ENCODE measurements at regions of chr7 and their contacts with region 1.

Region 1: DNA sequence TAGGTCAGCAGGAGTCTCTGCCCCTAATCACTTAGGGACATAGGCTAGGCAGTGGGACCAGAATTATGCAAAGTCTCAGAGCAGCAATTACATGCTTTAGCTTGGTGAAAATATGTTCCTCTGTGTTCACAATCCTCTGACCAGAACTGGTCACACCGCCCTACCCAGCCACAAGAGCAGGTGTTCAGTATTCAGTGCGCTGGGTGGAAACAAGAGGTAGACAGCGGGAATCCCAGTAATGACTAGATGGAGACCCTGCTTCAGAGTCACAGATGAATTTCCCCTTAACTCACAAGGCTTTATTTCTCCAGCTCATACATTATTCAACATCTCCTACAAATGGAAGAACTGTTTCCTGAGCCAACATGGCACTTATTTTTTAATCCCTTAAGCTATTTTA is 763.7 kb upstream of the POM121L12 start:
- DNase-seq: no peak
- H3K4me3 ChIP-seq: no peak overlapping the region
- H3K27ac ChIP-seq: peak overlapping the region; percentile 5
- H3K4me1 ChIP-seq: peaks cover 30% of the 10 kb centered on the region
- H3K27me3 ChIP-seq: no peaks in the 10 kb centered on the region
- CTCF ChIP-seq: no peak
- POLR2A ChIP-seq: no peak

Region 2: DNA sequence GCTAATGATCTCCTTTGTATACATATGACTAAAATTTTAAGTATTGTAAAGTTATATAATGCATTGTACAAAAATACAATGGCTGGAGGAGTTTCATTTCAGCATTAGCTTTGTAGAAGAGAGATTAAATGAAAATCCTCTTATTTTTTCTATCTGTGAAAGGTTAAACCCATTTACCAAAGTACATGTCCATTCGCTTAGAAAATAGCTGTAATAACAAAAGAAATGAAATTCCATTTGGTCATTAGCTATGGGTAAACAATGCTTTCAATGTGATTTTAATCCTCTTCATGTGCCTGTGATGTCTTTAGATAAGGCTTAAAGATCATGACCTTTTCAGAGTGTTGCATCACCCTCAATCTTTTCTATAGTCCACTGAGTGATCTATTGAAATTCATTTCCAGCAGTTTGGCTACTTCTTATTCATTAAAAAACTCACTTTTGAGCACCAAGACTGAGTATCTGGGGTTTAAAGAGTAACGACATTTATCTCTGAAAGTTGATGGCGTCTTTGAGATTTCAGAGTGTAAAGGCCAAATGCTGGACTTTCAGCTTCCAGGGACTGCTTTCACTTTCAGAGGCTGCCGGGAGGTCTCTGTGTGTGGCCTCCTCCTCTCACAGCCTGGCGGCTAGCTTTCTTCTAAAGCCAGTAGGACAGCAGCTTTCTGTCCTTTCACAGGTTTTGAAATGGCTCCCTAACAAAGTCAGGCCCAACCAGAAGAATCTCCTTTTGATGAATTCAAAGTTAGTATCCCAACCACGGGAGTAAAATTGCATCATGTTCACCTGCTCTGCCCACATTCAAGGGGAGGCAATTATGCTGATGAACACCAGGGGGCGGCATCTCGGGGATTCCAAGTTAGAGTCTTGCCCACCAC is 253.7 kb before region 1 on chr7:
- CTCF ChIA-PET with region 1: no interaction called
- POLR2A ChIA-PET with region 1: no interaction called
- dilution Hi-C with region 1: no loop called
- intact Hi-C with region 1: loop called (anchors 2 kb)
- DNase-seq: peak; percentile 18
- H3K4me3 ChIP-seq: no peak overlapping the region
- H3K27ac ChIP-seq: no peak overlapping the region
- H3K4me1 ChIP-seq: no peaks in the 10 kb centered on the region
- H3K27me3 ChIP-seq: no peaks in the 10 kb centered on the region
- CTCF ChIP-seq: peak; percentile 54 to 66
- POLR2A ChIP-seq: no peak

Region 3: GRCh38 chr7:52243685-52244084 is 28.0 kb before region 1 on chr7:
- CTCF ChIA-PET with region 1: no interaction called
- POLR2A ChIA-PET with region 1: no interaction called
- dilution Hi-C with region 1: no loop called
- intact Hi-C with region 1: no loop called
- DNase-seq: no peak
- H3K4me3 ChIP-seq: no peak overlapping the region
- H3K27ac ChIP-seq: no peak overlapping the region
- H3K4me1 ChIP-seq: no peaks in the 10 kb centered on the region
- H3K27me3 ChIP-seq: no peaks in the 10 kb centered on the region
- CTCF ChIP-seq: no peak
- POLR2A ChIP-seq: no peak

Region 4: GRCh38 chr7:52285689-52286088 is 14.0 kb after region 1 on chr7:
- CTCF ChIA-PET with region 1: interaction called, 13 read pairs
- POLR2A ChIA-PET with region 1: no interaction called
- dilution Hi-C with region 1: no loop called
- intact Hi-C with region 1: no loop called
- DNase-seq: no peak
- H3K4me3 ChIP-seq: no peak overlapping the region
- H3K27ac ChIP-seq: no peak overlapping the region
- H3K4me1 ChIP-seq: no peaks in the 10 kb centered on the region
- H3K27me3 ChIP-seq: no peaks in the 10 kb centered on the region
- CTCF ChIP-seq: no peak
- POLR2A ChIP-seq: no peak

Region 5: GRCh38 chr7:52838981-52839411 is 567.3 kb after region 1 on chr7:
- CTCF ChIA-PET with region 1: no interaction called
- POLR2A ChIA-PET with region 1: no interaction called
- dilution Hi-C with region 1: no loop called
- intact Hi-C with region 1: loop called (anchors 2 kb)
- DNase-seq: peak; percentile 94
- H3K4me3 ChIP-seq: peak overlapping the region in 1 of 3 experiments; percentile 35
- H3K27ac ChIP-seq: peak overlapping the region; percentile 93
- H3K4me1 ChIP-seq: peaks cover 20% of the 10 kb centered on the region
- H3K27me3 ChIP-seq: no peaks in the 10 kb centered on the region
- CTCF ChIP-seq: no peak
- POLR2A ChIP-seq: no peak

Region 6: GRCh38 chr7:53119514-53119941 is 847.8 kb after region 1 on chr7:
- CTCF ChIA-PET with region 1: no interaction called
- POLR2A ChIA-PET with region 1: interaction called, 3 read pairs
- dilution Hi-C with region 1: no loop called
- intact Hi-C with region 1: loop called (anchors 1 kb)
- DNase-seq: peak; percentile 99
- H3K4me3 ChIP-seq: no peak overlapping the region
- H3K27ac ChIP-seq: peak overlapping the region; percentile 95
- H3K4me1 ChIP-seq: peaks cover 27% of the 10 kb centered on the region
- H3K27me3 ChIP-seq: no peaks in the 10 kb centered on the region
- CTCF ChIP-seq: no peak
- POLR2A ChIP-seq: no peak

Region 7: DNA sequence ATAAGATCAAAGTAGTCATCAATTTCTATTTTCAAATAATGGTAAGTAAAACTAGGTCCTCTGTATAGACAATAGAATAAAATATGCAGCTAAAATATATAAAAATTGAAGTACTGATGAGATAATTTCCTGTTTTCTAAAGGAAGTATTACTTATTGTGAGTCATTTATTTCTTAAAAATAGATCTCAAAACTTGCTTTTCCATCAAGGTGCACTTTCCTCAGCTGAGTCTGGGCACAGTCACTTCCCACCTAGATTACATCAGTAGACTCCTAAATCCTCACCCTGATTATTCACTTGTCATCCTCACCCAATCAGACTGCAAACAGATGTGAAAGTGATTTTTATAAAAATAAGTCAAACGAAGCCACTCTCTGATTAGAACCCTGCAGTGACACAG is 975.3 kb after region 1 on chr7:
- CTCF ChIA-PET with region 1: no interaction called
- POLR2A ChIA-PET with region 1: no interaction called
- dilution Hi-C with region 1: no loop called
- intact Hi-C with region 1: loop called (anchors 1 kb)
- DNase-seq: peak; percentile 63
- H3K4me3 ChIP-seq: no peak overlapping the region
- H3K27ac ChIP-seq: peak overlapping the region; percentile 19
- H3K4me1 ChIP-seq: peaks cover 8% of the 10 kb centered on the region
- H3K27me3 ChIP-seq: no peaks in the 10 kb centered on the region
- CTCF ChIP-seq: no peak
- POLR2A ChIP-seq: no peak